SK-N-SH (cell line): ENCODE measurements at regions of chr17 and their contacts with region 1.

Region 1: GRCh38 chr17:79393358-79394202 is 217.3 kb downstream of the RBFOX3 start:
- DNase-seq: peak; percentile 97
- H3K4me3 ChIP-seq: no peak overlapping the region; a peak in 1 of 4 replicates
- H3K27ac ChIP-seq: no peak overlapping the region
- H3K4me1 ChIP-seq: no peaks in the 10 kb centered on the region; a peak in 1 of 4 replicates
- H3K27me3 ChIP-seq: peaks cover 64% of the 10 kb centered on the region
- CTCF ChIP-seq: peak; percentile 97
- EP300 ChIP-seq: no peak
- RAD21 ChIP-seq: peak; percentile 97

Region 2: DNA sequence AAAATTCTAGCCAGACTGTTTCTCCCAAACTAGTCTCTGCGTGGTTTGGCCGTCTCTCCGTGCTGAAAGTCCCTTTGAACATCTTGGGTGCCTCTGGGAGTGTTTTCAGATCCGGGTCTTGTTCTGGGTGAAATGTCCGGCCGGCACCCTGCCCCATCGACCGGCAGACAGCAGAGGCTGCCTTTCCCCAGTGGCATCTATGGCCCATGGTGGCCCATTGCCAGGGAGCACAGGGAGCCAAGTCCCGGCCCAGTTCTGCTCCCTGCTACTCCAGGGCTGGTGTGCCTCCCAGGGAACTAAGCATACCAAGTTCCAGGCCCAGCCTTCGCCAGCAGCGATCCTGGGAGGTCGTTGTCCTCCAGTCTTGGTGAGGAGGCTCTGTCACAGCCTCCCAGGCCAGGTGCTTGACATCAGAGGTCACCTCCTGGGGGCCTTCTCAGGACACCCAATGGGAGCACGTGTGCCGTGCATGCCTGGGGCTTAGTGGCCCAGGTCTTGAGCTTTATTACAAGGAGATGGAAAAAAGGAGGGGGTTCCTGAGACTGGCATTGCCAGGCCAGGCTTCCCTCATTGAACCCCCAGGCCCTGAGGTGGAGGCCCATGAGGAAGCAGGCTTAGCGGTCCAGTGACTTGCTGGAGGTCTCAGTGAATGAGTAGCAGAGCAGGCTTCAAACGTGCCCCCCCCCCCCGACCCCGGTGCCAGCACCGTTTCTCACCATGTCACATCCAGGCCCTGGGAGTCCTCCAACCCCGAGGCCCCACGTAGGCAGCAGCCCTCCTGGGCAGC is 961.2 kb before region 1 on chr17:
- CTCF ChIA-PET with region 1: no interaction called
- POLR2A ChIA-PET with region 1: no interaction called
- DNase-seq: no peak
- H3K4me3 ChIP-seq: no peak overlapping the region
- H3K27ac ChIP-seq: no peak overlapping the region
- H3K4me1 ChIP-seq: peaks cover 0 to 13% of the 10 kb centered on the region in 2 experiments; a peak in 1 of 4 replicates
- H3K27me3 ChIP-seq: no peaks in the 10 kb centered on the region
- CTCF ChIP-seq: no peak
- EP300 ChIP-seq: no peak
- RAD21 ChIP-seq: no peak

Region 3: GRCh38 chr17:78677303-78678221 is 716.0 kb before region 1 on chr17:
- CTCF ChIA-PET with region 1: no interaction called
- POLR2A ChIA-PET with region 1: no interaction called
- DNase-seq: no peak
- H3K4me3 ChIP-seq: no peak overlapping the region
- H3K27ac ChIP-seq: no peak overlapping the region
- H3K4me1 ChIP-seq: peaks cover 7 to 9% of the 10 kb centered on the region in 2 experiments; a peak in 3 of 4 replicates
- H3K27me3 ChIP-seq: no peaks in the 10 kb centered on the region
- CTCF ChIP-seq: no peak
- EP300 ChIP-seq: no peak
- RAD21 ChIP-seq: no peak

Region 4: GRCh38 chr17:79065105-79065670 is 328.4 kb before region 1 on chr17:
- CTCF ChIA-PET with region 1: interaction called, 41 read pairs
- POLR2A ChIA-PET with region 1: no interaction called
- DNase-seq: no peak
- H3K4me3 ChIP-seq: no peak overlapping the region
- H3K27ac ChIP-seq: no peak overlapping the region
- H3K4me1 ChIP-seq: no peaks in the 10 kb centered on the region
- H3K27me3 ChIP-seq: no peaks in the 10 kb centered on the region; the same call in 1 of the 2 replicates
- CTCF ChIP-seq: peak; percentile 68
- EP300 ChIP-seq: no peak
- RAD21 ChIP-seq: peak; percentile 65

Region 5: DNA sequence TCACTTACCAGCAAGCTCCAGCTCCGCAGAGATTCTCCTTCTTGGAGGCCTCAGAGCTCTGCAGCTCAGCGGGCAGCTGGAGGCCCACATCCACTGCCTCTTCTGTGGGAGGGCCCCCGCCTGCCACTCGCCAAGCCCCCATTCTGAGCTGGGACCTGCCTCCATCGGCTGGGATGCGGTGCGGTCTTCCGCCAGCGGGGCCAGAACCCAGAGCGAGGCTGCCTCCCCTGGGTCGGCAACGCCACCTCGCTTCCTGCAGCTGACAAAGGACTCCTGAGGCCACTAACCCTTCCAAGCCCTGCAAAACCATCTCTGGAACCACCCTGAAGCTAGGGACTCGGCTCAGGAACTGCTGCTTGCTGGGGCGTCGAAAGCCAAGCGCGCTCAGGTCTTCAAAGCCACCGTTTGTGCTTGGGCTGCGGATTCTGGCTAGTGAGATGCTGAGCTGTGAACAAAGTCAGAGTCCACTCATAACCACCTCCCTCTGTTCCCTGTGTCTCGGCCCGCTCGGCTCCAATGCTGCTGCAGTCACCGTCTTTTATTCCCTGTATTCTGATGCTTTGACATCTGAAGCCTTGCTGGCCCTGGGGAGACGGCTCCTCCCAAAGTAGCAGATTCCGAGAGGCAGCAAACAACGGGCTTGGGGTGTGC is 144.6 kb before region 1 on chr17:
- CTCF ChIA-PET with region 1: interaction called, 14 read pairs
- POLR2A ChIA-PET with region 1: no interaction called
- DNase-seq: no peak
- H3K4me3 ChIP-seq: no peak overlapping the region
- H3K27ac ChIP-seq: no peak overlapping the region
- H3K4me1 ChIP-seq: peaks cover 0 to 18% of the 10 kb centered on the region in 2 experiments; a peak in 1 of 4 replicates
- H3K27me3 ChIP-seq: peaks cover 7% of the 10 kb centered on the region
- CTCF ChIP-seq: no peak
- EP300 ChIP-seq: no peak
- RAD21 ChIP-seq: no peak

Region 6: GRCh38 chr17:79314617-79315357 is 78.8 kb before region 1 on chr17:
- CTCF ChIA-PET with region 1: interaction called, 14 read pairs
- POLR2A ChIA-PET with region 1: no interaction called
- DNase-seq: no peak
- H3K4me3 ChIP-seq: no peak overlapping the region
- H3K27ac ChIP-seq: no peak overlapping the region
- H3K4me1 ChIP-seq: peaks cover 0 to 3% of the 10 kb centered on the region in 2 experiments; a peak in 1 of 4 replicates
- H3K27me3 ChIP-seq: peaks cover 11% of the 10 kb centered on the region; the same call in 1 of the 2 replicates
- CTCF ChIP-seq: no peak
- EP300 ChIP-seq: no peak
- RAD21 ChIP-seq: no peak

Region 7: DNA sequence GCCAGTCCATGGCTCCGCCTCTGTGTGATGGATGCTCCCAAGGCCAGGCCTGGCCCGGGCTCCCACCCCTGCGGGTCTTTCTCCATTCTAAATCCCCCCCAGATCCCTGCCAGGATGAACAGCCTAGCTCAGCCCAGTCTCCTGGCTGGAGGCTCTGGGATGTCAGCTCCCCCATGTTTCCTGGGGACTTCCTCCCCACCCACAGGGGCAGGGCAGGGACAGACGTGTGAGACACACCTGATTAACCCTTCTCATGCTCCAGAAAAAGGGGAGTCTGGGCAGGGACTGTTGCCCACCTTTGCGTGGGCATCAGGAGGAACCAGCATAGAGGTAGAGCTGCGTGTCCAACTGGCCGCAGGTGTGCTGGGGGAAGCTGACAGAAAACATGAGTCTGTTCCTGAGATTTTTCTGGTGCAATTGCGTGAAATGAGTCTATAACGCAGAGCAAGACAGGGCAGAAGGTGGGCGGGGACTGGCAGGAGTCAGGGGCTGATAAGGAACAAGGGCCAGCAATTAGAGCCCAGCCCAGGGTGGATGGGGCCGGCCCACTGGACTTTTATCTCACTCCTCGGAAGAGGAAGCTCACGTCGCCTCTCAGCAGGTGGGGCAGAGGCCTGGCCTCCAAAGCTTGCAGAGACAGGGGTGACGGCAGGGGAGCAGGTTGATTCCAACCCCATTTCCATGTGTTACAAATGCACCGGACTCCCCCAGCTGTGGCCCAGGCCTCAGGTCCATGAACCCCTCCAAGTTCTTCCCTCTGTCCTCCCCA is 20.9 kb before region 1 on chr17:
- CTCF ChIA-PET with region 1: interaction called, 61 read pairs
- POLR2A ChIA-PET with region 1: no interaction called
- DNase-seq: no peak
- H3K4me3 ChIP-seq: no peak overlapping the region
- H3K27ac ChIP-seq: no peak overlapping the region
- H3K4me1 ChIP-seq: no peaks in the 10 kb centered on the region
- H3K27me3 ChIP-seq: peaks cover 25% of the 10 kb centered on the region; the same call in 1 of the 2 replicates
- CTCF ChIP-seq: no peak
- EP300 ChIP-seq: no peak
- RAD21 ChIP-seq: no peak

Region 8: DNA sequence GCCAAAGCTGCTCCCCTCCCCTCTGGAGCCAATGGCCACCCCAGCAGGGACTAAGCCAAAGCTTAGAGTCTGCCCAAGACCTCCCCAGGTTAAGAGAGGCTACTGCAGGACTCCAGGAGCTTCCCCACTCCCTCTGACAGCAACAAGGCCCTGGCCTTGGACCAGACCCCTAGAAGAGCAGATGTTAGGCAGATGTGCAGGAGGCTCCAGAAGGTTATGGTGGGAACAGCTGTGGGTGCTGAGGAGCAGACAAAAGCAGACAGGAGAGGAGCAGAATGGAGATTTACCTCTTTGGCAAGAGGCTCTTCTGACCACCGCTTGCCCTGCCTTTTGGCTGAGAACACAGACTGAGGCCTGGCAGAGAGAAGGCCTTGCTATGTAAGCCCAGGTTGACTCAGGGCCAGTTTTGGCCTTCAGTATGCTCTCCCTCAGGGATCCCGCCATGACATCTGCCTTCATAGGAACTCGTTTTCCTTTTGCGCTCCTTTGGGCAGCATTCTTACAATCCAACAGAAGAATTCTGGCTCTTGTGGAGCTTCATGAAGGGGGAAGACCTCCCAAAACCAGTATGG is 104.3 kb after region 1 on chr17:
- CTCF ChIA-PET with region 1: no interaction called
- POLR2A ChIA-PET with region 1: no interaction called
- DNase-seq: no peak
- H3K4me3 ChIP-seq: no peak overlapping the region
- H3K27ac ChIP-seq: no peak overlapping the region
- H3K4me1 ChIP-seq: peaks cover 0 to 6% of the 10 kb centered on the region in 2 experiments; a peak in 1 of 4 replicates
- H3K27me3 ChIP-seq: no peaks in the 10 kb centered on the region
- CTCF ChIP-seq: no peak
- EP300 ChIP-seq: no peak
- RAD21 ChIP-seq: no peak

Region 9: GRCh38 chr17:79612468-79613194 is 219.1 kb after region 1 on chr17:
- CTCF ChIA-PET with region 1: interaction called, 45 read pairs
- POLR2A ChIA-PET with region 1: no interaction called
- DNase-seq: peak; percentile 92
- H3K4me3 ChIP-seq: no peak overlapping the region; a peak in 1 of 4 replicates
- H3K27ac ChIP-seq: no peak overlapping the region
- H3K4me1 ChIP-seq: no peaks in the 10 kb centered on the region
- H3K27me3 ChIP-seq: peaks cover 57% of the 10 kb centered on the region
- CTCF ChIP-seq: peak; percentile 73
- EP300 ChIP-seq: no peak
- RAD21 ChIP-seq: peak; percentile 85